ENCODE measurements at regions of chr19 and their contacts with region 1.

Region 1: GRCh38 chr19:10251792-10252694 is at the start of gene MRPL4:
- DNase-seq: peak; percentile 99
- H3K4me3 ChIP-seq: peak within 1 kb of the TSS; percentile 14 to 89 (median 59)
- H3K27ac ChIP-seq: peak within 1 kb of the TSS; percentile 14
- H3K4me1 ChIP-seq: peaks cover 8% of the 10 kb centered on the region
- H3K27me3 ChIP-seq: no peaks in the 10 kb centered on the region
- CTCF ChIP-seq: no peak
- POLR2A ChIP-seq: peak; percentile 72
- total RNA-seq, gene MRPL4: 69.4 and 70.4 TPM in 2 replicates

Region 2: GRCh38 chr19:9885077-9885552 is 366.9 kb before region 1 on chr19:
- CTCF ChIA-PET with region 1: no interaction called
- POLR2A ChIA-PET with region 1: no interaction called
- dilution Hi-C with region 1: no loop called
- intact Hi-C with region 1: no loop called
- DNase-seq: no peak
- H3K4me3 ChIP-seq: no peak overlapping the region
- H3K27ac ChIP-seq: no peak overlapping the region
- H3K4me1 ChIP-seq: no peaks in the 10 kb centered on the region
- H3K27me3 ChIP-seq: no peaks in the 10 kb centered on the region
- CTCF ChIP-seq: peak in 1 of 2 donors; percentile 14
- POLR2A ChIP-seq: no peak

Region 3: DNA sequence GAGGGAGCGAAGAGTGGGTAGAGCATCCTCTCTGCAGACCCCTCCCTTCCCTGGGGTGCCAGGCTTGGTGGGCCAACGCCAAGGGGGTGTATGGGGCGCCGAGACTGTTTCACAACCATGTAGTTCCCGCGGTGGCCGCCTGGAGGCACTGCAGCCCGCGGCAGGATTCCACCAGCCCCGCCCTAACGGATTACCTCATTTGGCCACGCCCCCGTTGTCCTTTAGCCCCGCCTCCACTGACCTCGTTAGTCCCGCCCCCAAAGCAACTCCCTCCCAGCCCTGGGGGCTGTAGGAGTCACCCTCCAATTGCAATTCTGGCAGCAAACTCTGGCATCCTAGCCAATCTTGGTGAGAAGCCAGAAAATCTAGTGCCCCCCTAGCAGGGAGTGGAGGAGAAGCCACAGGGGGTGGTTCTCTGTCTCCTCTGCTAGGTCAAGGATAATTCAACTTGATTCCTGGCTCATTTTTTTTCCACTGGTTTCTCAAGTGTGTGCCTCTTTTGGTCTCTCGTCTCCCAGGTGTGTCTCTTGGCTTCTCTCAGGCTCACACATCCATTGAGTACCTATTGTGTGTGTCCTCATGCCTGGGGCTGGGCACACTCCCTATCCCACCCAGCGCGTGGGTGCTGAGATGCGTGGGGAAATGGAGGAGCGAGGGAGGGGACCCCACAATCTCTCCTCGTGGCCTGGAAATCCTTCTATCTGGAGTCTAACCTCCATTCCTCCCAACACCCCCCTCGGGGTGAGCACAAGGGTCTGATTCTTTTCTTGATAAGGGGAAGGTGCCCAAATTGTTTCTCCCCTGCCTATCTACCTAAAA is 317.7 kb before region 1 on chr19:
- CTCF ChIA-PET with region 1: interaction called, 65 read pairs
- POLR2A ChIA-PET with region 1: no interaction called
- dilution Hi-C with region 1: no loop called
- intact Hi-C with region 1: no loop called
- DNase-seq: peak; percentile 50
- H3K4me3 ChIP-seq: no peak overlapping the region
- H3K27ac ChIP-seq: no peak overlapping the region
- H3K4me1 ChIP-seq: no peaks in the 10 kb centered on the region
- H3K27me3 ChIP-seq: peaks cover 18 to 19% of the 10 kb centered on the region in 2 experiments
- CTCF ChIP-seq: peak; percentile 89 to 92
- POLR2A ChIP-seq: no peak

Region 4: GRCh38 chr19:10095948-10096621 is 156.0 kb before region 1 on chr19:
- CTCF ChIA-PET with region 1: interaction called, 37 read pairs
- POLR2A ChIA-PET with region 1: no interaction called
- dilution Hi-C with region 1: no loop called
- intact Hi-C with region 1: loop called (anchors 1 kb)
- DNase-seq: peak; percentile 91
- H3K4me3 ChIP-seq: peak overlapping the region in 1 of 3 experiments; percentile 35
- H3K27ac ChIP-seq: no peak overlapping the region
- H3K4me1 ChIP-seq: peaks cover 3% of the 10 kb centered on the region
- H3K27me3 ChIP-seq: peaks cover 0 to 3% of the 10 kb centered on the region in 2 experiments
- CTCF ChIP-seq: no peak
- POLR2A ChIP-seq: peak; percentile 75

Region 5: GRCh38 chr19:10173257-10173926 is 78.7 kb before region 1 on chr19:
- CTCF ChIA-PET with region 1: interaction called, 10 read pairs
- POLR2A ChIA-PET with region 1: no interaction called
- dilution Hi-C with region 1: no loop called
- intact Hi-C with region 1: no loop called
- DNase-seq: no peak
- H3K4me3 ChIP-seq: no peak overlapping the region
- H3K27ac ChIP-seq: no peak overlapping the region
- H3K4me1 ChIP-seq: no peaks in the 10 kb centered on the region
- H3K27me3 ChIP-seq: no peaks in the 10 kb centered on the region
- CTCF ChIP-seq: no peak
- POLR2A ChIP-seq: no peak

Region 6: DNA sequence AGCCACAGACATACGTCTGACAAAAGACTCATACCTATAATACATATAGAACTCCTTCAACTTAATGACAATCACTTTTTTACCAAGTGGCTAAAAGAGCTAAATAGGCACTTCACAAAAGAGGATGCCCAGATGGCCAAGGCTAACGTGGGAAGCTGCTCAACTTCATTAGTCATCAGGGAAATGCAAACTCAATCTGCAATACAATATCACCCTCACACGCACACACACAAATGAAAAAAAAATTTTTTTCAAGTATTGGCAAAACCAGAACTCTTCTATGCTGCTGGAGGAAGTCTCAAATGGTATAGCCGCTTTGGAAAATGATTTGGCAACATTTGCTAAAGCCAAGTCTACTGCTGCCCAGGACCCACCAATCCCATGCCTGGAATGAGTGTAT is 42.7 kb before region 1 on chr19:
- CTCF ChIA-PET with region 1: interaction called, 10 read pairs
- POLR2A ChIA-PET with region 1: no interaction called
- dilution Hi-C with region 1: no loop called
- intact Hi-C with region 1: no loop called
- DNase-seq: no peak
- H3K4me3 ChIP-seq: no peak overlapping the region
- H3K27ac ChIP-seq: no peak overlapping the region
- H3K4me1 ChIP-seq: no peaks in the 10 kb centered on the region
- H3K27me3 ChIP-seq: peaks cover 0 to 1% of the 10 kb centered on the region in 2 experiments
- CTCF ChIP-seq: no peak
- POLR2A ChIP-seq: no peak

Region 7: GRCh38 chr19:10230861-10231611 is 21.0 kb before region 1 on chr19 and contains the start of gene S1PR2:
- CTCF ChIA-PET with region 1: interaction called, 48 read pairs
- POLR2A ChIA-PET with region 1: no interaction called
- dilution Hi-C with region 1: no loop called
- intact Hi-C with region 1: loop called (anchors 1 kb)
- DNase-seq: peak; percentile 31
- H3K4me3 ChIP-seq: peak within 1 kb of the TSS; percentile 44 to 71 (median 68)
- H3K27ac ChIP-seq: no peak within 1 kb of the TSS
- H3K4me1 ChIP-seq: peaks cover 9% of the 10 kb centered on the region
- H3K27me3 ChIP-seq: no peaks in the 10 kb centered on the region
- CTCF ChIP-seq: no peak
- POLR2A ChIP-seq: no peak
- total RNA-seq, gene S1PR2: 1.0 and 1.3 TPM in 2 replicates

Region 8: GRCh38 chr19:10305139-10305806 is 53.2 kb after region 1 on chr19:
- CTCF ChIA-PET with region 1: no interaction called
- POLR2A ChIA-PET with region 1: no interaction called
- dilution Hi-C with region 1: no loop called
- intact Hi-C with region 1: no loop called
- DNase-seq: no peak
- H3K4me3 ChIP-seq: no peak overlapping the region
- H3K27ac ChIP-seq: no peak overlapping the region
- H3K4me1 ChIP-seq: no peaks in the 10 kb centered on the region
- H3K27me3 ChIP-seq: no peaks in the 10 kb centered on the region
- CTCF ChIP-seq: no peak
- POLR2A ChIP-seq: no peak

Region 9: DNA sequence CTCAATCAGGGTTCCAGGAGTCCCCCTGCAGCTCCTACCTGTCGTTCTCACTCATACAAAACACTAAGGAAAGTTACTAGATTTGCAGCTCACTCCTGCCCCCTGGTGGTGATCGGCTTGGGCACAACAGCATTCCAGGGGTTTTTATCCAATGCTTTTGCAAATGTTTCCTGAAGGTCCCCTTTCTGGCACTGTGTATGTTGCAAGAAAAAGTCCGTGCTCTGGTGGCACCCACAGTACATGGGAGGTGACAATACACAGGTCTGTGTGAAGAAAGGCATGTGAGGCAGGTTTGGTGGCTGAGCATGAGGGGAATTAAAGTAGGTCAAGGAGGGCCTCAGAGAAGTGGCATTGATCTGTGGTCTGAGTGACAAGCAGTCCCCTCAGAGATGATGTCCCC is 136.9 kb after region 1 on chr19:
- CTCF ChIA-PET with region 1: interaction called, 606 read pairs
- POLR2A ChIA-PET with region 1: no interaction called
- dilution Hi-C with region 1: no loop called
- intact Hi-C with region 1: no loop called
- DNase-seq: peak; percentile 85
- H3K4me3 ChIP-seq: no peak overlapping the region
- H3K27ac ChIP-seq: no peak overlapping the region
- H3K4me1 ChIP-seq: no peaks in the 10 kb centered on the region
- H3K27me3 ChIP-seq: no peaks in the 10 kb centered on the region
- CTCF ChIP-seq: peak; percentile 88 to 93
- POLR2A ChIP-seq: peak; percentile 43